HAP-1 (cell line): ENCODE measurements at regions of chr1 and their contacts with region 1.

Region 1: GRCh38 chr1:214146523-214146922 is 134.4 kb upstream of the SMYD2 start:
- DNase-seq: no peak
- H3K4me3 ChIP-seq: no peak overlapping the region
- H3K4me1 ChIP-seq: peaks cover 7% of the 10 kb centered on the region; the same call in 1 of the 2 replicates
- H3K27me3 ChIP-seq: no peaks in the 10 kb centered on the region

Region 2: GRCh38 chr1:213244664-213245091 is 901.8 kb before region 1 on chr1:
- in situ Hi-C with region 1: loop called (anchors 25 kb)
- DNase-seq: peak; percentile 62 to 75
- H3K4me3 ChIP-seq: no peak overlapping the region
- H3K4me1 ChIP-seq: peaks cover 5% of the 10 kb centered on the region
- H3K27me3 ChIP-seq: no peaks in the 10 kb centered on the region

Region 3: DNA sequence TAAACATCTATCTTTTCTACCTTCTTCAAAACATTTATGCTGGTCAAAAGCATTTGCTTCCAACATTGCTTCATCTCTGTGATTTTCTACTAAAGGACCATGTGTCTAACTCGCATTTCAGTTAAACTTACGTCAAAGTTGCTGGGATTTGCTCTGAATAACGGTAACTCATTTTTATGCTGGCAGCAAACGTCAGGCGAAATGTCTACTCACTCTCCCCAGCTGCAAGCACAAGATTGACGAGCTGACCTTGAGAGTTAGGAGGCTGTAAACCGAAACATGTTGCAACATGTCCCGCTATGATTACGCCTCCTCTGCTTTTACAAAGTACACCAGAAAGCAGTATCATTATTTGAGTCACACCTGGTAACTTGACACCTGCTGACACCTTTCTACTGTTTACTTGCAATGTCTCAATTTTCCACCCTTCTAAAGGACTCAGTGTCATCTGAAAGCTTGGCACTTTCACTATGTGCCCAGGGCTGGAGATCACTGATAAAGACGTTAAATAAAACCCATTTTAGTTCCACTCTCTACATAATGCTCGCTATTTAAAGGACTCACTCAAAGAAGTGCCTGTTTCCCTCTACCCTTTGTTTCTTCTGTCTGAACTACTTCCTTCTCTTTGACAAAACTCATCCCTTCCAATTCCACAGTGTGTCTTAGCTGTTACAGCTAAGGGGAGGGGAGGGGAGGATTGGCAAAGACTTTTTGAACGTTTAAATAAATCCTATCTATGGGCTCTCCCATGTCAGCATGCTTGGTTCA is 293.0 kb after region 1 on chr1:
- in situ Hi-C with region 1: no loop called
- DNase-seq: peak; percentile 45 to 49
- H3K4me3 ChIP-seq: no peak overlapping the region
- H3K4me1 ChIP-seq: peaks cover 12% of the 10 kb centered on the region
- H3K27me3 ChIP-seq: no peaks in the 10 kb centered on the region